Ovary (tissue), 10 donors: ENCODE measurements at regions of chr5 and their contacts with region 1.

Region 1: DNA sequence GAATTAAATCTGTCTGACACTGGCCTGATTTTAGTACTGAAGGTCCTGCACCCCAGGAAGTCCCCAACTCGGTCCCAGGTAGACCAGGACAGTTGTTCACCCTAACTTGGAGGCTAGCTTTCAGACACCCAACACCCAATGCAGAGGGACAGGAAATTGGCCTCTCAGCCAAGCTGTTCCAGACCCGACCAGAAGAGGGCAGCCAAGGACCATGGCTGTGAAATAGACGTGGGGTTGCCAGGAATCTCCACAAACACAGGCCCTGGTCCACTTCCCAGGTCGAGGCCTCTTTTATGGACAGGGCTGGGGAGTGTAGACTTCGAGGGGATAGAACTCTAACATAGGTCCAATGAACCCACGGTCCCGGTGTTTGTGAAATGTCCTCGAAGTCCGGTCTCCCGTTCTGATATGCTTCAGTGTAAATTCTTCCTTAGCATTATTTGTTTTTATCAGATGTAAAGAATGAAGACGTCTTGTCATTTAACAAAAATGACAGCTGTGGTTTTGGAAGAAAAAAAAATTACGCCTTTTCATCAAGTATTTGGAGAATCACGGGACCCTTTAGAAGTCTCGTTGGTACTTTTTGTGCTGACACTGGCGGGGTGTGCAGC is 260.3 kb upstream of the ADAMTS16 start:
- DNase-seq: peak; percentile 85 to 94 (median 90)
- H3K4me3 ChIP-seq: no peak overlapping the region
- H3K27ac ChIP-seq: no peak overlapping the region
- H3K4me1 ChIP-seq: peaks cover 6% of the 10 kb centered on the region
- H3K27me3 ChIP-seq: no peaks in the 10 kb centered on the region
- CTCF ChIP-seq: peak; percentile 95 to 97 (median 95)
- EP300 ChIP-seq: no peak
- POLR2A ChIP-seq: peak; percentile 32

Region 2: DNA sequence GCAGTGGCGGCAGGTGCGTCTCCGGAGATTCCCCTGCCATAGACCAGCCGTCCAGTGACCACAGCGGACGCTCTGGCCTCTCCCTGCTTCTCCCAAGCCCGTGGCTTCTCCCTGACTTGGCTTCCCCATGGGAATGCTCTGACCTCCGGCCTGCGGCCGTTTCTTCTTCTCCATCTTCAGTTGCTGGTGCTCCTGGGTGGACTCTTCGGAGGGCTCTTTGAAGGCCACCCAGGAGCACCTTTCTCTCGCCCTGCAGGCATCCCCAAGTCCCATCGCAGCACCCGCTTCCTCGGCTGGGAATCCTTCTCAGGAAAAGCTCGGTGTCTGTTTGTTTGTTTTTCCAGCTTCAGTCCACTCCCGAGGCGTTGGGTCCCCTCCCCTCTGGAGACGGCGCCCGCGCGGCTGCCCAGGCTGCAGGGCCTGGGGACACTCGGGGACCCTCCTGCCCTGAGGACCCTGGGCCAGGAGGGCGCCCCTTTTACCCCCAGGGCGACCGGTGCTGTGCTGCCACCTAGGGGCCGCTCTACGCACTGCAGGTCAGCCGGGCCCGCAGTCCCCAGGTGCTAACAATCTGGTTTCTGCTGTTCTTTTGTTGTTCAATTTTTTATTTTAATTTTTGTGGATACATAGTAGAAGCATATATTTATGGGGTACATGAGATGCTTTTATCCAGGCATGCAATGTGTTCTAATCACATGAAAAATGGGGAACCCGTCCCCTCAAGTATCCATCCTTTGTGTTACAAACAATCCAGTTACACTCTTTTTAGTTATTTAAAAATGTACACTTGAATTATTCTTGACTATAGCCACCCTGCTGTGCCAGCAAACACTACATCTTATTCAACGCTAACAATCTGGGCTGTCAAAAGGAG is 62.4 kb after region 1 on chr5:
- intact Hi-C with region 1: loop called (anchors 5 kb)
- DNase-seq: peak in 4 of 5 donors; percentile 51 to 74 (median 62)
- H3K4me3 ChIP-seq: no peak overlapping the region
- H3K27ac ChIP-seq: no peak overlapping the region
- H3K4me1 ChIP-seq: no peaks in the 10 kb centered on the region
- H3K27me3 ChIP-seq: no peaks in the 10 kb centered on the region
- CTCF ChIP-seq: peak; percentile 80 to 82 (median 81)
- EP300 ChIP-seq: no peak
- POLR2A ChIP-seq: no peak

Region 3: GRCh38 chr5:5141625-5142532 is 262.1 kb after region 1 on chr5:
- intact Hi-C with region 1: loop called in 2 of 4 experiments (anchors 1 to 5 kb)
- DNase-seq: peak in 4 of 5 donors; percentile 47 to 74 (median 62)
- H3K4me3 ChIP-seq: no peak overlapping the region
- H3K27ac ChIP-seq: no peak overlapping the region
- H3K4me1 ChIP-seq: peaks cover 6% of the 10 kb centered on the region
- H3K27me3 ChIP-seq: no peaks in the 10 kb centered on the region
- CTCF ChIP-seq: peak; percentile 57 to 81 (median 75)
- EP300 ChIP-seq: no peak
- POLR2A ChIP-seq: no peak

Region 4: GRCh38 chr5:5409151-5409810 is 529.5 kb after region 1 on chr5:
- intact Hi-C with region 1: loop called in 2 of 4 experiments (anchors 10 kb)
- DNase-seq: no peak
- H3K4me3 ChIP-seq: no peak overlapping the region
- H3K27ac ChIP-seq: no peak overlapping the region
- H3K4me1 ChIP-seq: no peaks in the 10 kb centered on the region
- H3K27me3 ChIP-seq: no peaks in the 10 kb centered on the region
- CTCF ChIP-seq: no peak
- EP300 ChIP-seq: no peak
- POLR2A ChIP-seq: no peak

Region 5: DNA sequence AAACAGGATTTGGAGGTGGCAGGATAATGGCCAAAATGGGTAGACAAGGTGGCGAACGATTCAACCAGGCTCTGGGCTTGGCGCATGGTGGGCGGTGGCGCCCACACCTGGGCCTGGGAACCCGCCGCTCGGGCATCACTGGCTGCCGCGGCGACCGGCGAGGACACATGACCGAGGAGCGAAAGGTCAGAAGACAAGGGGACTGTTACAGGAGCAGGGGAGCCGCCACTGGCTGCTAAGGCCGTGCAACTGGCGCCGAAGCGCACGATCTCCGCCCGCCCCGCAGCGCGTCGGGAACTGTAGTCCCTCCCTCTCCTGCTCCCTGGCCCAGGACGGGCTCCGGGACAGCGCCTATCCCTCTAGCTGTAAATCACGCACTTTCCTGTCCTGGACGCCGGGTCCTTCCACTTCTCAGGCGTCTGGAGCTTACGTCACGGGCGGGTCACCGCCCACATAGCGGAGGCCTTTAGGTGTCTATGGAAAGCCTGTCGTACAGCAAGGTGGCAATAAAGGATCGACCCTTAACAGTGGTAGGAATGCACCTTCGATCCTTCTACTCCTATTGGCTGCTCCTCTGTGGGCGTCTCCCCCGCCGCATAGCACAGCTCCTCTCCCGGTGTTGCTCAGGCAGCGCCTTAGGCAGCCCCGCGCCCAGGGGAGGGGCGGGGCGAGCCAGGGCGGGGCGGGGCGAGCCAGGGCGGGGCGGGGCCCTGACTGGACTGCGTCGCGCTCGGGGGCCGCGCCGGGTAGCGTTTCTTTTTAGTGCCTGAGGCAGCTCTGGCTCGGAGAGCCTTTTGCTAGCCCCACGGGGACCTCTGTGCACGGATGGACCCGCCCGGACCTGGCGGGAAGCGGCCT is 542.4 kb after region 1 on chr5 and contains the start of gene ICE1:
- intact Hi-C with region 1: loop called in 2 of 4 experiments (anchors 5 kb)
- DNase-seq: peak; percentile 97 to 98 (median 97)
- H3K4me3 ChIP-seq: peak within 1 kb of the TSS; percentile 75
- H3K27ac ChIP-seq: peak within 1 kb of the TSS; percentile 99 to 100
- H3K4me1 ChIP-seq: peaks cover 17% of the 10 kb centered on the region
- H3K27me3 ChIP-seq: no peaks in the 10 kb centered on the region
- CTCF ChIP-seq: peak in 1 of 3 donors; percentile 4
- EP300 ChIP-seq: peak; percentile 31
- POLR2A ChIP-seq: peak; percentile 76
- total RNA-seq, gene ICE1: 22.7 to 38.0 (median 30.7) TPM

Region 6: GRCh38 chr5:6246820-6247437 is 1367.1 kb after region 1 on chr5:
- intact Hi-C with region 1: no loop called
- DNase-seq: no peak
- H3K4me3 ChIP-seq: no peak overlapping the region
- H3K27ac ChIP-seq: no peak overlapping the region
- H3K4me1 ChIP-seq: no peaks in the 10 kb centered on the region
- H3K27me3 ChIP-seq: no peaks in the 10 kb centered on the region
- CTCF ChIP-seq: no peak
- EP300 ChIP-seq: no peak
- POLR2A ChIP-seq: no peak